ENCODE measurements at regions of chr14 and their contacts with region 1.

Region 1: GRCh38 chr14:99245564-99246511 is 26.2 kb downstream of the BCL11B start:
- DNase-seq: no peak
- H3K4me3 Mint-ChIP-seq: peak overlapping the region; percentile 82
- H3K27ac Mint-ChIP-seq: peak overlapping the region; percentile 99
- H3K4me1 Mint-ChIP-seq: peaks cover 87% of the 10 kb centered on the region
- H3K27me3 Mint-ChIP-seq: no peaks in the 10 kb centered on the region

Region 2: DNA sequence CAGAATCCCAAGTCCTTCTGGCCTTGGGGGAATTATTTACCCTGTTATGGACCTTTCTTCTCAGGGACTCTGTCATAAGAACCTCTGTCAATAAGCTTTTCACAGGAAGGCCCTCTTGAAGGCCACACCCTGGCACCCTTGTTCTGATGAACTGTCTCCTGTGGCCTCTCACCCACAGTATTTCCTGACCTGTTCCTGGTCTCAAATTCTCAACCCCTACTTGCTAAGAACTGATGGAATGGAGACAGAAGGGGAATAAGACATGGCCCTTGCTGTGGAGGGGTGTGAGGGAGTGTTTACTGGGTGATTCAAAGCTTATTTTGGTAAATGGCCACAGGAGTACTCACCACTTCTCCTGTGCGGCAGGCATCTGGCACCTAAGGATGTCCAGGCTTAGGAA is 1056.8 kb before region 1 on chr14:
- intact Hi-C with region 1: loop called (anchors 2 kb)
- DNase-seq: peak; percentile 38
- H3K4me3 Mint-ChIP-seq: peak overlapping the region; percentile 75
- H3K27ac Mint-ChIP-seq: peak overlapping the region; percentile 97
- H3K4me1 Mint-ChIP-seq: peaks cover 100% of the 10 kb centered on the region
- H3K27me3 Mint-ChIP-seq: no peaks in the 10 kb centered on the region